Endothelial cell of umbilical vein (primary cell): ENCODE measurements at regions of chr13 and their contacts with region 1.

Region 1: DNA sequence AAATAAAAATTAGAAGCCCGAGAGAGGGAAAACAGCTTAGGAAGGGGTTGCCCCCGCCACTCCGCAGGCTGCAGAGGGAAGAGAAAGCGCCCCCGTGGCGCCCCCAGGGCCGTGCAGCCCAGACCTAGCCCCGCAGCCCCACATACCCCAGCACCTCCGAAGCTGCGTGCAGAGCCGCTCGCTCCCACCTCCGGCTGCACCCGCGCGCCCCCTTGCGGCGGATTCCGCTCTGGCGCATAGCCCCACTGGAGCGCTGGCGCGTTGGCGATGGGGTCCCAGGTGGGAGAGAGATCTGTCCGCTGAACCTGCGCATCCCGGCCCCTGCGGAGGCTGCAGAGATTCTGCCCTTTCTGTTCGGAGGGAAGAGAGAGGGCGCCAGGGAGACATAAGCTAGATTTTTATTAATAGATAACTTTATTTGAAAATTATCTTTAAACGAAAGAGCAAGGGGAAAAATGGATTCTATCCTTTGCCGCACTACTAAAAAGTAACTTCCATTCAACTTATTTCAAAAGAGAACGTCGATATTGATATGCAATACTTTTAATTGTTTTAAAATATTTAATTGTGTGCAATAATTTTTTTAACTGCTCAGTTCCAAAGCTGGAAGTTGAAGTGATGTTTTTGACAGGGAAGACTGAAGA is 11.7 kb upstream of the CLN5 start:
- DNase-seq: peak; percentile 52
- H3K4me3 ChIP-seq: no peak overlapping the region
- H3K27ac ChIP-seq: no peak overlapping the region
- H3K4me1 ChIP-seq: peaks cover 2% of the 10 kb centered on the region
- H3K27me3 ChIP-seq: peaks cover 16 to 24% of the 10 kb centered on the region in 2 experiments
- CTCF ChIP-seq: peak; percentile 95 to 100
- POLR2A ChIP-seq: no peak

Region 2: DNA sequence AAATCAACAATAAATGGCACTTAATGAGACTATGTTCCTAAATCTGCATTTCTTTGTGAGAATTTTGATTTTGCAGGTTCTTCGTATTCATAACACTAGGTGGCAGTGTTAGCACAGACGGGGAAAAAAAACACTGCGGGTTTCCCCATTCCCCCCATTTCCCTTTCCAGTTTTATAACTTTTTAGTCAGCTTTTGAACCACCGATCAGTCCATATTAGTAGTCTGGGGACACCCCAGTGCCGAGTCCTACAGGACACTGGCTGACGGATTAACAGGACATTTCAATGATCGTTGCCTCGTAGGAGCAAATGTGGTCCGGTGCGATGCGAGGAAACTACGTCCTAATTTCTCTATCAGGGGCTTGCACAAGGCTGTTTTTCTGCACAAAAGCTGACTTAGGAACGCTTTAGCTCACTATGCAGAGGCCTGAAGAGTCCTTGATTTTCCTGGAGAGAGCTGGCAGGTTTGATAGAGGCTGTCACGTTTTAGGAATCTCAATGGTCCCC is 1109.7 kb before region 1 on chr13:
- CTCF ChIA-PET with region 1: interaction called, 32 read pairs
- POLR2A ChIA-PET with region 1: no interaction called
- dilution Hi-C with region 1: no loop called
- intact Hi-C with region 1: no loop called
- DNase-seq: peak; percentile 36
- H3K4me3 ChIP-seq: peak overlapping the region; percentile 28 to 74 (median 37)
- H3K27ac ChIP-seq: no peak overlapping the region
- H3K4me1 ChIP-seq: peaks cover 4% of the 10 kb centered on the region
- H3K27me3 ChIP-seq: peaks cover 0 to 2% of the 10 kb centered on the region in 2 experiments
- CTCF ChIP-seq: peak; percentile 58 to 59
- POLR2A ChIP-seq: no peak

Region 3: GRCh38 chr13:76637641-76638141 is 342.5 kb before region 1 on chr13:
- CTCF ChIA-PET with region 1: no interaction called
- POLR2A ChIA-PET with region 1: no interaction called
- dilution Hi-C with region 1: no loop called
- intact Hi-C with region 1: no loop called
- DNase-seq: peak; percentile 80
- H3K4me3 ChIP-seq: no peak overlapping the region
- H3K27ac ChIP-seq: no peak overlapping the region
- H3K4me1 ChIP-seq: peaks cover 6% of the 10 kb centered on the region
- H3K27me3 ChIP-seq: no peaks in the 10 kb centered on the region
- CTCF ChIP-seq: no peak
- POLR2A ChIP-seq: no peak

Region 4: GRCh38 chr13:76667551-76667950 is 312.6 kb before region 1 on chr13:
- CTCF ChIA-PET with region 1: interaction called, 6 read pairs
- POLR2A ChIA-PET with region 1: no interaction called
- dilution Hi-C with region 1: no loop called
- intact Hi-C with region 1: loop called (anchors 1 kb)
- DNase-seq: peak; percentile 89
- H3K4me3 ChIP-seq: no peak overlapping the region
- H3K27ac ChIP-seq: no peak overlapping the region
- H3K4me1 ChIP-seq: no peaks in the 10 kb centered on the region
- H3K27me3 ChIP-seq: no peaks in the 10 kb centered on the region
- CTCF ChIP-seq: peak; percentile 21 to 39
- POLR2A ChIP-seq: no peak

Region 5: GRCh38 chr13:76991796-76992547 is 11.8 kb after region 1 on chr13 and contains the start of gene CLN5:
- CTCF ChIA-PET with region 1: interaction called, 12 read pairs
- POLR2A ChIA-PET with region 1: no interaction called
- dilution Hi-C with region 1: no loop called
- intact Hi-C with region 1: no loop called
- DNase-seq: peak; percentile 87
- H3K4me3 ChIP-seq: peak within 1 kb of the TSS; percentile 36 to 90 (median 83)
- H3K27ac ChIP-seq: peak within 1 kb of the TSS; percentile 40
- H3K4me1 ChIP-seq: peaks cover 13% of the 10 kb centered on the region
- H3K27me3 ChIP-seq: peaks cover 4% of the 10 kb centered on the region in 2 experiments
- CTCF ChIP-seq: no peak
- POLR2A ChIP-seq: peak; percentile 81
- total RNA-seq, gene CLN5: 22.7 and 22.8 TPM in 2 replicates